Activated CD4-positive, alpha-beta memory T cell treated with anti-CD3 and anti-CD28 coated beads for 36 hours (primary cell): ENCODE measurements at regions of chr11 and their contacts with region 1.

Region 1: DNA sequence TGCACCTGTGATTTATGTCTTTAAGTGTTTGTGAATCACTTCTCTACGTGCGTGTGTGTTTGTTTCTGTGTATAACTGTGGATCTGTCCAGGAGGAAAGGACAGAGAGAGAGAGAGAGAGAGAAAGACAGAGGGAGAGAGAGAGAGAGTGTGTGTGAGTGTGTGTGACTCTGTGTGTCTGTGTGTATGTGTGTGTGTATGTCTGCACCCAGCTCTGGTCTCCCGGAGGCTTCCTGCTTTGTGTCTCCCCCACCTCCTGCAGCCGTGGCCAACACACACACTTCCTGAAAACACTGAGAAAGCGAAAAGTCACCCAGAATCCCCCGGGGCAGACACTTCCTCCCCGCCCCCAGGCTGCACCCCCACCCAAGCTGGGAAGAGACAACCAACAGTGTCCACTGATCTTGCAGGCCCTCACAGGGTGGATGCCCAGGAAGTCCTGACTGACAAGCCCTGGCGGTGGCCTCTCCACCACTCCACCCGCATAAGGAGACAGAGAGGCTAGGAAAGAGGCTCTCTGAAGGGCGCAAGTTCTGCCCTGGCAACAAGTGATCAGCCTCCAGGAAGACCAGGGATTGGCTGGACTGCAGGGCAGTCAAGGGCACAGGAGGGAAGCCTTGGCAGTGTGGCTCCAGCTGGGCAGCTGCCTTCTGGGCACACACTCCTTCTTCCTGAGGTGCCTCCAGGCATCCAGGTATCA is 30.0 kb downstream of the ARAP1 start:
- DNase-seq: peak; percentile 91
- H3K4me3 Mint-ChIP-seq: peak overlapping the region; percentile 90
- H3K27ac Mint-ChIP-seq: peak overlapping the region; percentile 91
- H3K4me1 Mint-ChIP-seq: peaks cover 51% of the 10 kb centered on the region
- H3K27me3 Mint-ChIP-seq: no peaks in the 10 kb centered on the region

Region 2: DNA sequence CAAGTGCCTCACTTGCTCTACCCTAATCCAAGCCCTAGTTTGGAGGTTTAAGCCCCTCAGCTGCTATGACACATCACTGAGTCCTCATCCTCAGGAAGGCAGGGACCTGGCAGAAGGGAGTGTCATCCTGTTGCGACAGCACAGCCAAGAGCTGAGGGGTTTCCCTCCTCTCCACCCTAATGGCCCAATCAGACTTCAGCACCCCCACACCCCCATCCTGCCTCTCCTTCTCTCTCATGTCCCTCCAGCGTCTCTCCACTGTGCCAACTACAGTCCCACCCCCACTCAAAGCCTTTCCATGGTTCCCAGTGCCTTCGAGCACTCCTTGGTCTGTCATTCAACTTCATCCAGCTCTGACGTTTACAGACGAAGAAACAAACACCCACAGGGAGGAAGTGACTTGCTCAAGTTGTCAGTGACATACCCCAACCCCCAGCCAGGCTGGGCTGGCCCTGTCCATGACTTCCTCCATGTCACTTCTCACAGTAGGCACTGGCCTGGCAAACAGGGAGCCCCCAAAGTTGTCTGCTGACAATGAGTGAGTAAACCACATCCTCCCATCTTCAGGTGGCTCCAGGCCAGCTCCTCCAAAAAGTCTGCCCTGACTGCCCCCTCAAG is 14.4 kb after region 1 on chr11:
- CTCF ChIA-PET with region 1: interaction called, 24 read pairs
- POLR2A ChIA-PET with region 1: interaction called, 7 read pairs
- intact Hi-C with region 1: loop called (anchors 1 kb)
- DNase-seq: peak; percentile 86
- H3K4me3 Mint-ChIP-seq: peak overlapping the region; percentile 24
- H3K27ac Mint-ChIP-seq: peak overlapping the region; percentile 91
- H3K4me1 Mint-ChIP-seq: peaks cover 51% of the 10 kb centered on the region
- H3K27me3 Mint-ChIP-seq: no peaks in the 10 kb centered on the region

Region 3: DNA sequence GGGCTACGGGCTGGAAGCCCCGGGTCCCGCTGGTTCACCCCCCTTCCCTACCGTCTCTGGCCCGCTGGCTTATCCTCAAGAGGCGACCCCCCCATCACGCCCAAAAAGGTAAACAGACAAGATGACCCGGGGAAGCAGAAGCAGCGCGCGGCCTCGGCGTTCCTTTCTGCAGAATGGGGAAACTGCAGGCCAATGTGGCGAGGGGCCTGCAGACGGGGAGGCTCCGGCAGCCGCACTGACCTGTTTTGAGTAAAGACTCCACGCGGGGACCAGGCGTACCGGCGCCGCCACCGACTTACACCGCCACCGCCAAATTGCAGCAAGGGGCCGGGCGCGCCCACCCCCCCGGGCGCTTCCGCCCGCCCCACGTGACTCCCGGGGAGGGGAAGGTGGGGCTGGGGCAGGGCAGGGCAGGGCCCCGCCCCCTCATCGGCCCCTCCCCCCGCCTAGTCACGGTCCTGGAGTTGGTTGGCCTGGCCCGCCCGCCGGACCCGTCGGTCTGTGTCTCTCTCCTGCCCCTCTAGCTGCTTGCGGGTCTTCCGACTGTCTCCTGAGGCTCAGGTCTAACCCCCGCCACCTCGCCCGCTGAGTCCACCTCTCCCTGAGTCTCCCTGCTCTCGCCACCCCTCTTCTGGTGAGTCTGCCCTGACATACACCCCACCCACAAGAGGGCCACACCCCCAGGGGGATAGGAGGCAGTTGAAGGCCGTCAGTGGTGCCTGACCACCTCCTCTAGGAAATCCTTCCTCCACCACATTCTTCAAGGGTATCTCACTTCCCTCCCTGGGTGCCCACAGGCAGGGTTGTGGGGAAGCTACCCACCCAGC is 30.1 kb after region 1 on chr11 and contains the start of gene ARAP1:
- CTCF ChIA-PET with region 1: interaction called, 16 read pairs
- POLR2A ChIA-PET with region 1: interaction called, 4 read pairs
- intact Hi-C with region 1: no loop called
- DNase-seq: peak; percentile 85
- H3K4me3 Mint-ChIP-seq: peak within 1 kb of the TSS; percentile 94
- H3K27ac Mint-ChIP-seq: peak within 1 kb of the TSS; percentile 87
- H3K4me1 Mint-ChIP-seq: peaks cover 39% of the 10 kb centered on the region
- H3K27me3 Mint-ChIP-seq: no peaks in the 10 kb centered on the region
- total RNA-seq, gene ARAP1: 77.4 to 79.6 TPM

Region 4: DNA sequence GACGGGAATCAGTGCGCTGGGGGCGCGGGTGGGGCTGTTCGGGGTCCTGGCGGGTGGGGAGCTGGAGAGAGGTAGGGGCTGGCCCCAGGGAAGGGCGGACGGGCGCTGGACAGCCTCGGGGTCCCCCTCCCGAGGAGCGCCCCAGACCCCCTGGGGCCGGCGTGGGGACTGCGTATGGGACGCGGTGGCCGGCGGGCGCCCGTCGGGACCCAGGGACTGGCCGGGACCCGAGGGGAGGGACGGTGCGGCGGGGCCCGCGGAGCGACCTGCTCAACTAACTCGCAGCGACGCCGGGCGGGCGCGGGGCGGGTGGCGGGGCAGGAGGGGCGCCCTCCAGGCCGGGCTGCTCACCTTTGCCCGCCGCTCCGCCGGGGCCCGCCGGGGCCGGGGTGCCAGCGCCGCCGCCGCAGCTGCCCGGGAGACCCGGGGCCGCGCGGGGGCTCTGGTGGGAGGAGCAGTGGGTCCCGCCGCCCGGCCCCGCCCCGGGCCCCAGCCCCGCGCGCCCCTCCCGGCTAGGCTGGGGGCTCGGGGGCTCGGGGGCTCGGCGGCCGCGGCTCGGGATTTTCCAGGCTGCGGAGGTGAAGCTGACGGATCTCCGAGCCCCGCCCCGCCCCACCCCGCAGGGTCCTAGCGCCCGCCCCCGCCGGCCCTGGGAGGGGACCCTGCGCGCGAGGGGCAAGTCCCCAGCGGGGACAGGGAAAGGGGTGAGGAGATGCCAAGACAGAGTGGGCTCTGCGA is 59.3 kb after region 1 on chr11:
- CTCF ChIA-PET with region 1: interaction called, 15 read pairs
- POLR2A ChIA-PET with region 1: no interaction called
- intact Hi-C with region 1: no loop called
- DNase-seq: peak; percentile 61
- H3K4me3 Mint-ChIP-seq: peak overlapping the region; percentile 69
- H3K27ac Mint-ChIP-seq: no peak overlapping the region
- H3K4me1 Mint-ChIP-seq: peaks cover 25% of the 10 kb centered on the region
- H3K27me3 Mint-ChIP-seq: no peaks in the 10 kb centered on the region

Region 5: GRCh38 chr11:72814286-72815109 is 92.3 kb after region 1 on chr11 and contains the start of gene ATG16L2:
- CTCF ChIA-PET with region 1: interaction called, 46 read pairs
- POLR2A ChIA-PET with region 1: interaction called, 12 read pairs
- intact Hi-C with region 1: loop called (anchors 1 kb)
- DNase-seq: peak; percentile 92
- H3K4me3 Mint-ChIP-seq: peak within 1 kb of the TSS; percentile 98
- H3K27ac Mint-ChIP-seq: peak within 1 kb of the TSS; percentile 98
- H3K4me1 Mint-ChIP-seq: peaks cover 33% of the 10 kb centered on the region
- H3K27me3 Mint-ChIP-seq: no peaks in the 10 kb centered on the region
- total RNA-seq, gene ATG16L2: 79.7 to 91.1 TPM

Region 6: GRCh38 chr11:72848846-72849466 is 126.8 kb after region 1 on chr11:
- CTCF ChIA-PET with region 1: interaction called, 5 read pairs
- POLR2A ChIA-PET with region 1: no interaction called
- intact Hi-C with region 1: loop called (anchors 1 kb)
- DNase-seq: peak; percentile 57
- H3K4me3 Mint-ChIP-seq: no peak overlapping the region
- H3K27ac Mint-ChIP-seq: no peak overlapping the region
- H3K4me1 Mint-ChIP-seq: peaks cover 9% of the 10 kb centered on the region
- H3K27me3 Mint-ChIP-seq: no peaks in the 10 kb centered on the region

Region 7: GRCh38 chr11:73177778-73178577 is 455.8 kb after region 1 on chr11:
- CTCF ChIA-PET with region 1: interaction called, 19 read pairs
- POLR2A ChIA-PET with region 1: no interaction called
- intact Hi-C with region 1: loop called (anchors 1 kb)
- DNase-seq: peak; percentile 86
- H3K4me3 Mint-ChIP-seq: no peak overlapping the region
- H3K27ac Mint-ChIP-seq: no peak overlapping the region
- H3K4me1 Mint-ChIP-seq: no peaks in the 10 kb centered on the region
- H3K27me3 Mint-ChIP-seq: peaks cover 2% of the 10 kb centered on the region